Activated CD4-positive, alpha-beta memory T cell treated with anti-CD3 and anti-CD28 coated beads for 36 hours (primary cell): ENCODE measurements at regions of chr6 and their contacts with region 1.

Region 1: DNA sequence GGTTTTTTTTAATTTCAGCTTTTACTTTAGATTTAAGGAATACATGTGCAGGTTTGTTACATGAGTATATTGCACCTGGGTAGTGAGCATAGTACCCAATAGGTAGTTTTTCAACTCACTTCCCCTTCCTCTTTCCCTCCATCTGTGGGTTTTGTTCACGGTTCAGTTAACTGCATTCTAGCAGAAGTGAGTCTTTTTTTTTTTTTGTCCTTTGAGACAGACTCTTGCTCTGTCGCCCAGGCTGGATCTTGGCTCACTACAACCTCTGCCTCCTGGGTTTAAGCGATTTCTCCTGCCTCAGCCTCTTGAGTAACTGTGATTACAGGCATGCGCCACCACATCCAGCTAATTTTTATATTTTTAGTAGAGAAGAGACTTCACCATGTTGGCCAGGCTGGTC is 8.7 kb downstream of the UBR2 start:
- DNase-seq: no peak
- H3K4me3 Mint-ChIP-seq: no peak overlapping the region
- H3K27ac Mint-ChIP-seq: no peak overlapping the region
- H3K4me1 Mint-ChIP-seq: peaks cover 50% of the 10 kb centered on the region
- H3K27me3 Mint-ChIP-seq: no peaks in the 10 kb centered on the region

Region 2: GRCh38 chr6:42618686-42619085 is 46.2 kb after region 1 on chr6:
- CTCF ChIA-PET with region 1: no interaction called
- POLR2A ChIA-PET with region 1: no interaction called
- intact Hi-C with region 1: loop called (anchors 5 kb)
- DNase-seq: peak; percentile 19
- H3K4me3 Mint-ChIP-seq: no peak overlapping the region
- H3K27ac Mint-ChIP-seq: no peak overlapping the region
- H3K4me1 Mint-ChIP-seq: peaks cover 16% of the 10 kb centered on the region
- H3K27me3 Mint-ChIP-seq: no peaks in the 10 kb centered on the region

Region 3: DNA sequence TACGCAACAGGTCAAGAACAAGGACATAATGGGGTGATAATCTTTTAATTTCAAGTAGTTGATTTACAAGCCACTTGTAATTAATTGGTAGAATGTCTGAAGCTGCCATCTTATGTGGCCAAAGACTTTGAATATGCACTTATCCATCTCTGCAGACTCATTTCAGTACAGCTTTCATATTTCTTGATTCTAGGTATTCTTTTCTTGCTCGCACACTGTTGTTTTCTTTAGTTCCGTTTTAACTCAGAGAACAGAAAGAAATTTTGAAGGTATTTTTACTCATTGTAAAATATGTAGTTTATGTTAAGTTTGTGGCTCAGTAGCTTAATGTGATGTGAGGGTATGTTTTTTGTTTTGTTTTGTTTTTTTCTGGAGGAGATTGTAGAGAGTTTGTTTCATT is 65.2 kb after region 1 on chr6:
- CTCF ChIA-PET with region 1: no interaction called
- POLR2A ChIA-PET with region 1: no interaction called
- intact Hi-C with region 1: loop called (anchors 1 kb)
- DNase-seq: no peak
- H3K4me3 Mint-ChIP-seq: peak overlapping the region; percentile 0
- H3K27ac Mint-ChIP-seq: peak overlapping the region; percentile 69
- H3K4me1 Mint-ChIP-seq: peaks cover 22% of the 10 kb centered on the region
- H3K27me3 Mint-ChIP-seq: no peaks in the 10 kb centered on the region

Region 4: DNA sequence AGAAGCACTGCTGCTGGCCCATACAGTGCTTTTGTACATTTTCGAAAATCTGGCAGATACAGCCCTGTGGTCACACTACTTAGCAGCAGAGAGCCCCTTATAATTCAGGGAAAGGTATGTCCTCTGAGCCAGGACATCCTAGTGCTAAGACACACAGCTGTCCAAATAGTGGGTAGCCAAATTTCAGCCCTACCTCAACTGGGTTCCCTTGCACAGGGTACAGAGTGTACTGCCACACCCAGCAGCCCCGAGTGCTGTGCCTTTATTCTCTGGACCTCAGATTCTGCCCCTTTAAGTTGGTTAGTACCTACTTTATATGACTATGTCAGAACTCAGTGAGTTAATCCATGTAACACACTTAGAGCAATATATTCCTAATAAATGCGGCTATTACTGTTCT is 102.3 kb after region 1 on chr6:
- CTCF ChIA-PET with region 1: no interaction called
- POLR2A ChIA-PET with region 1: no interaction called
- intact Hi-C with region 1: no loop called
- DNase-seq: no peak
- H3K4me3 Mint-ChIP-seq: no peak overlapping the region
- H3K27ac Mint-ChIP-seq: no peak overlapping the region
- H3K4me1 Mint-ChIP-seq: peaks cover 19% of the 10 kb centered on the region
- H3K27me3 Mint-ChIP-seq: no peaks in the 10 kb centered on the region

Region 5: GRCh38 chr6:42771741-42772100 is 199.2 kb after region 1 on chr6:
- CTCF ChIA-PET with region 1: no interaction called
- POLR2A ChIA-PET with region 1: no interaction called
- intact Hi-C with region 1: loop called (anchors 5 kb)
- DNase-seq: no peak
- H3K4me3 Mint-ChIP-seq: peak overlapping the region; percentile 74
- H3K27ac Mint-ChIP-seq: peak overlapping the region; percentile 98
- H3K4me1 Mint-ChIP-seq: peaks cover 56% of the 10 kb centered on the region
- H3K27me3 Mint-ChIP-seq: no peaks in the 10 kb centered on the region

Region 6: GRCh38 chr6:42890311-42891198 is 318.0 kb after region 1 on chr6:
- CTCF ChIA-PET with region 1: no interaction called
- POLR2A ChIA-PET with region 1: interaction called, 3 read pairs
- intact Hi-C with region 1: loop called (anchors 5 kb)
- DNase-seq: peak; percentile 96
- H3K4me3 Mint-ChIP-seq: peak overlapping the region; percentile 88
- H3K27ac Mint-ChIP-seq: peak overlapping the region; percentile 94
- H3K4me1 Mint-ChIP-seq: peaks cover 25% of the 10 kb centered on the region
- H3K27me3 Mint-ChIP-seq: no peaks in the 10 kb centered on the region